Psoas muscle (tissue), 8 donors: ENCODE measurements at regions of chr20 and their contacts with region 1.

Region 1: GRCh38 chr20:396619-397431 is 11.3 kb upstream of the RBCK1 start:
- DNase-seq: no peak
- ATAC-seq: no peak
- H3K4me3 ChIP-seq: no peak overlapping the region
- H3K27ac ChIP-seq: no peak overlapping the region
- H3K4me1 ChIP-seq: no peaks in the 10 kb centered on the region
- H3K27me3 ChIP-seq: no peaks in the 10 kb centered on the region
- CTCF ChIP-seq: no peak

Region 2: DNA sequence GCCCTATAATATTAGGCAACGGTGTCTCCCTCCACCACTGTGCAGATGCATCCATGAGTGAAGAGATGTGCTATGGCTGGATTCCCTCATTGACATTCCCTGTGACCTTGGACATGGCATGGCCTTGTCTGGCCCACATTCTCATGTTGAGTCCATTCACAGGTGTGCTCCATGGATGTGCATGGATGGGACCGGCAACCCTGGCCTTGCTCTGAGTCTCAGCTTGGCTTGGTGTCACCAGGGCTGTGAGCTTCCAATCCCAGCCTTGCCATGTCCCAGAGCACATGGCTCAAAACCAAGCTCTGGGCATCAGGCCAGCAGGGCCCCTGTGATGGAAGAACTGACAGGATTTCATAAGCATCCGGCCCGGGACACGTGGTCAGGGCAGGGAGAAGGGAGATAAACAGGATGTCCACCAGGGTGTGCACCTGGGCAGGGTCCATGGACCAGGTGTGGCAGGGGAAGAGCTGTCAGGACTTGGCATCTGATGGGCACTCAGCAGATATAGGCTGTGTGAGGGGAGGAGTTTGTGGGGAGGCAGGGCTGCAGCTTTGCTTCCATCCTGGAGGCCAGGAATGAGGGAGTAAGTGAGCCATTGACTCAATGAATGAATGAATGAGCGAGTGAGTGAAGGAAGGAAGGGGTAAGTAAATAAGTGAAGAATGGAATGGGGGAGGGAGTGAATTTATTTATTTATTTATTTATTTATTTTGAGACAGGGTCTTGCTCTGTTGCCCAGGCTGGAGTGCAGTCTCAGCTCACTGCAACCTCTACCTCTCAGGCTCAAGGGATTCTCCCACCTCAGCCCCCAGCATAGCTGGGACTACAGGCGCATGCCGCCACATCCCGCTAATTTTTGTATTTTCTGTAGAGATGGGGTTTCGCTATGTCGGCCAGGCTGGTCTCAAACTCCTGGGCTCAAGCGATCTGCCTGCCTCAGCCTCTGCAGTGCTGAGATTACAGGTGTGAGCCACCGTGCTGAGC is 34.3 kb before region 1 on chr20:
- intact Hi-C with region 1: loop called in 1 of 2 experiments (anchors 5 kb)
- DNase-seq: peak; percentile 76 to 82
- ATAC-seq: peak; percentile 64 to 85 (median 71)
- H3K4me3 ChIP-seq: no peak overlapping the region
- H3K27ac ChIP-seq: no peak overlapping the region
- H3K4me1 ChIP-seq: peaks cover 5% of the 10 kb centered on the region
- H3K27me3 ChIP-seq: no peaks in the 10 kb centered on the region
- CTCF ChIP-seq: peak; percentile 17